ENCODE measurements at regions of chr19 and their contacts with region 1.

Region 1: GRCh38 chr19:41457241-41457640 is 14.3 kb downstream of the ERICH4 start:
- DNase-seq: no peak
- ATAC-seq: peak; percentile 18
- H3K4me3 ChIP-seq: no peak overlapping the region
- H3K4me1 ChIP-seq: no peaks in the 10 kb centered on the region
- CTCF ChIP-seq: no peak

Region 2: DNA sequence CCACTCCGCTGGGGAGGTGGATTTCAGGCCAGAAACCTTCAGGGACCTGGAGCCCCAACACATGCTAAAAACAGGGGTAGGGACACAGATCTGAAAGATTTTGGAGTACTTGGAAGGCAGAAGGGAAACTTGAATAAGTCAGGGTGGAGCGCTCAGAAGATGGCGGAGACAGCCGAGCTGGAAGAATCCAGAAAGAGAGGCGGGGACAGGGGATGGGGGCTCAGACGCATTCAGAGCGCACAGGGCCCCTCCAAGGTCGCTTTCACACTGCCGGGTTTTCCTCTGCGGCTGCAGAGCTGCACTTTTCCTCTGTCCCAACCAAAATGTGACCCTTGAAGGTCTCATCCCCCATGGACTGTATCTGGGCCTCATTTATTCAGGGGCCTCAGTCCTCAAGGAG is 42.7 kb after region 1 on chr19:
- intact Hi-C with region 1: no loop called
- DNase-seq: no peak
- ATAC-seq: no peak
- H3K4me3 ChIP-seq: no peak overlapping the region
- H3K4me1 ChIP-seq: no peaks in the 10 kb centered on the region
- CTCF ChIP-seq: no peak

Region 3: GRCh38 chr19:41563854-41564514 is 106.7 kb after region 1 on chr19:
- intact Hi-C with region 1: loop called in 1 of 2 experiments (anchors 10 kb)
- DNase-seq: no peak
- ATAC-seq: peak; percentile 44
- H3K4me3 ChIP-seq: no peak overlapping the region
- H3K4me1 ChIP-seq: no peaks in the 10 kb centered on the region
- CTCF ChIP-seq: no peak